CD4-positive, alpha-beta T cell (primary cell): ENCODE measurements at regions of chr11 and their contacts with region 1.

Region 1: GRCh38 chr11:59550368-59550841 is 39.1 kb downstream of the OR4D9 start:
- DNase-seq: peak; percentile 71 to 94 (median 82)
- ATAC-seq: peak; percentile 81
- H3K4me3 ChIP-seq: peak overlapping the region; percentile 57
- H3K4me3 Mint-ChIP-seq: peak overlapping the region; percentile 94
- H3K27ac ChIP-seq: peak overlapping the region; percentile 35 to 37
- H3K27ac Mint-ChIP-seq: peak overlapping the region; percentile 99
- H3K4me1 ChIP-seq: peaks cover 15% of the 10 kb centered on the region
- H3K4me1 Mint-ChIP-seq: peaks cover 33% of the 10 kb centered on the region
- H3K27me3 ChIP-seq: no peaks in the 10 kb centered on the region
- H3K27me3 Mint-ChIP-seq: peaks cover 11% of the 10 kb centered on the region
- CTCF ChIP-seq: peak; percentile 60

Region 2: GRCh38 chr11:59560702-59561469 is 10.5 kb after region 1 on chr11:
- CTCF ChIA-PET with region 1: interaction called, 19 read pairs
- POLR2A ChIA-PET with region 1: interaction called, 50 read pairs
- intact Hi-C with region 1: loop called (anchors 1 kb)
- DNase-seq: peak; percentile 70 to 92 (median 80)
- ATAC-seq: peak; percentile 71
- H3K4me3 ChIP-seq: peak overlapping the region; percentile 92
- H3K4me3 Mint-ChIP-seq: peak overlapping the region; percentile 97
- H3K27ac ChIP-seq: peak overlapping the region; percentile 71 to 73
- H3K27ac Mint-ChIP-seq: peak overlapping the region; percentile 92
- H3K4me1 ChIP-seq: peaks cover 45% of the 10 kb centered on the region
- H3K4me1 Mint-ChIP-seq: peaks cover 50% of the 10 kb centered on the region
- H3K27me3 ChIP-seq: no peaks in the 10 kb centered on the region
- H3K27me3 Mint-ChIP-seq: peaks cover 10% of the 10 kb centered on the region
- CTCF ChIP-seq: no peak

Region 3: GRCh38 chr11:59574467-59574866 is 24.1 kb after region 1 on chr11:
- CTCF ChIA-PET with region 1: no interaction called
- POLR2A ChIA-PET with region 1: no interaction called
- intact Hi-C with region 1: no loop called
- DNase-seq: no peak
- ATAC-seq: no peak
- H3K4me3 ChIP-seq: no peak overlapping the region
- H3K4me3 Mint-ChIP-seq: no peak overlapping the region
- H3K27ac ChIP-seq: no peak overlapping the region
- H3K27ac Mint-ChIP-seq: no peak overlapping the region
- H3K4me1 ChIP-seq: no peaks in the 10 kb centered on the region
- H3K4me1 Mint-ChIP-seq: no peaks in the 10 kb centered on the region
- H3K27me3 ChIP-seq: no peaks in the 10 kb centered on the region
- H3K27me3 Mint-ChIP-seq: no peaks in the 10 kb centered on the region
- CTCF ChIP-seq: no peak